ENCODE measurements at regions of chr1 and their contacts with region 1.

Region 1: GRCh38 chr1:45490626-45491486 is at the start of gene TESK2:
- DNase-seq: peak; percentile 99
- H3K4me3 ChIP-seq: peak within 1 kb of the TSS; percentile 62 to 93 (median 82)
- H3K27ac ChIP-seq: peak within 1 kb of the TSS; percentile 73 to 89 (median 84)
- H3K4me1 ChIP-seq: peaks cover 0 to 24% (median 19%) of the 10 kb centered on the region in 4 donors
- H3K27me3 ChIP-seq: no peaks in the 10 kb centered on the region
- CTCF ChIP-seq: peak in 2 of 3 experiments; percentile 35 to 36
- EP300 ChIP-seq: no peak
- POLR2A ChIP-seq: peak; percentile 47
- total RNA-seq, gene TESK2: 3.3 to 6.5 (median 4.8) TPM

Region 2: GRCh38 chr1:45359882-45360513 is 130.9 kb before region 1 on chr1:
- intact Hi-C with region 1: loop called (anchors 2 kb)
- DNase-seq: no peak
- H3K4me3 ChIP-seq: peak overlapping the region in 2 of 4 donors; percentile 10 to 15
- H3K27ac ChIP-seq: peak overlapping the region; percentile 58 to 74 (median 70)
- H3K4me1 ChIP-seq: peaks cover 12 to 26% (median 22%) of the 10 kb centered on the region in 4 donors
- H3K27me3 ChIP-seq: no peaks in the 10 kb centered on the region
- CTCF ChIP-seq: peak; percentile 73 to 83 (median 76)
- EP300 ChIP-seq: no peak
- POLR2A ChIP-seq: no peak

Measured in esophagus muscularis mucosa (tissue), 4 donors.